ENCODE measurements at regions of chr2 and their contacts with region 1.

Region 1: GRCh38 chr2:231514103-231514950 is 15.9 kb downstream of the NMUR1 start:
- DNase-seq: peak; percentile 96 to 99 (median 98)
- ATAC-seq: peak; percentile 97
- H3K4me3 ChIP-seq: peak overlapping the region; percentile 86 to 88
- H3K4me3 Mint-ChIP-seq: peak overlapping the region; percentile 90
- H3K27ac ChIP-seq: peak overlapping the region; percentile 85 to 94
- H3K27ac Mint-ChIP-seq: peak overlapping the region; percentile 97
- H3K4me1 ChIP-seq: peaks cover 13% of the 10 kb centered on the region
- H3K4me1 Mint-ChIP-seq: peaks cover 18% of the 10 kb centered on the region
- H3K27me3 ChIP-seq: no peaks in the 10 kb centered on the region
- H3K27me3 Mint-ChIP-seq: no peaks in the 10 kb centered on the region
- CTCF ChIP-seq: no peak

Region 2: GRCh38 chr2:231482806-231483391 is 31.4 kb before region 1 on chr2:
- CTCF ChIA-PET with region 1: interaction called, 19 read pairs
- POLR2A ChIA-PET with region 1: interaction called, 11 read pairs
- intact Hi-C with region 1: loop called in 1 of 2 experiments (anchors 1 kb)
- DNase-seq: peak; percentile 47 to 86 (median 73)
- ATAC-seq: peak; percentile 82
- H3K4me3 ChIP-seq: peak overlapping the region; percentile 71 to 73
- H3K4me3 Mint-ChIP-seq: peak overlapping the region; percentile 76
- H3K27ac ChIP-seq: peak overlapping the region; percentile 77 to 89
- H3K27ac Mint-ChIP-seq: peak overlapping the region; percentile 91
- H3K4me1 ChIP-seq: peaks cover 4% of the 10 kb centered on the region
- H3K4me1 Mint-ChIP-seq: peaks cover 14% of the 10 kb centered on the region
- H3K27me3 ChIP-seq: no peaks in the 10 kb centered on the region
- H3K27me3 Mint-ChIP-seq: no peaks in the 10 kb centered on the region
- CTCF ChIP-seq: peak; percentile 75

Region 3: DNA sequence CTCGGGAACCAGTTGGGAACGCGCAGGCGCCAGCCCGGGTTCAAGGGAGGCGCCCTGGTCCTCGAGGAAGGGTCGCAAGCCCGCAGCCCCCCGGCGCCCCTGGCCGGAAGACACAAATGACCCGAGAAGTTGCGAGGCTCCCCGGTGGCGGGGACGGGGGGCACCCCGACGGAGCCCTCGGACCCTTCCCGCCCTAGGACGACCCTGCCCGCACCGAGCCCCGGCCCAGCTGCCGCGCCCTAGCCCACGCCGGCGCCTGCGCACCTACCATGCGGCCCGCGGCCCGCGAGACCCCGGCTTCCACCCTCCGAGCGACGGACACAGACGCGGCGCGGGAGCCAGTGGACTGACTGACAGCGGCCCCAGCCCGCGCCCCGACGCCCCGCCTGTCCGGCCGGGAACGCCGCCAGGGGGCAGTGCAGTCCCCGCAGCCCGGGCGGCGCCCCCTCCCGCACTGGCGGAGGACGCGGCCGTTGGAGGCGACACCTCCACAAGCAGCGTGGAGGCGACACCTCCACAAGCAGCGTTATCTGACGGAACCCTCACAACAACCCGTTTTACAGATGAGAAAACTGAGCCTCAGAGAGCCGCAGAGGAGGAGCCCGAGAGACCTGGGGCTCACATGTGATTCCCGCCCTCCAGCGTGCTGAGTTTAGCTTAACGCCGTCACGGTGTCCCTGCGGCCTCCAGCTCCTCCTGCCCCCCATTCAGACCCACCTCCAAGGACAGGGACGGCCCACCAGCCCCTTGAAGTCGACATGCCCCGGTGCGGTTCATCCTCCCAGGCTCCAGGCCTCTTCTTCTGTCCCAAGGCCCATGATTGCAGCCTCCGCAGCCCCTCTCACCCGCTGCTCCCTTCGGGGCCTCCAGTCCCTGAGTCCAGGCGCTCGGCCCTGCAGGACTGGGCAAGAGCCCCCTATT is 16.0 kb after region 1 on chr2 and contains the start of gene NMUR1:
- CTCF ChIA-PET with region 1: interaction called, 14 read pairs
- POLR2A ChIA-PET with region 1: interaction called, 3 read pairs
- intact Hi-C with region 1: loop called in 1 of 2 experiments (anchors 1 kb)
- DNase-seq: peak; percentile 48 to 89 (median 69)
- ATAC-seq: peak; percentile 92
- H3K4me3 ChIP-seq: peak within 1 kb of the TSS; percentile 33 to 50
- H3K4me3 Mint-ChIP-seq: peak within 1 kb of the TSS; percentile 58
- H3K27ac ChIP-seq: peak within 1 kb of the TSS in 1 of 2 experiments; percentile 67
- H3K27ac Mint-ChIP-seq: peak within 1 kb of the TSS; percentile 32
- H3K4me1 ChIP-seq: peaks cover 33% of the 10 kb centered on the region
- H3K4me1 Mint-ChIP-seq: peaks cover 30% of the 10 kb centered on the region
- H3K27me3 ChIP-seq: peaks cover 0 to 7% of the 10 kb centered on the region in 2 experiments
- H3K27me3 Mint-ChIP-seq: peaks cover 8% of the 10 kb centered on the region
- CTCF ChIP-seq: peak; percentile 89
- total RNA-seq, gene NMUR1: 0.27 to 0.50 TPM

Region 4: DNA sequence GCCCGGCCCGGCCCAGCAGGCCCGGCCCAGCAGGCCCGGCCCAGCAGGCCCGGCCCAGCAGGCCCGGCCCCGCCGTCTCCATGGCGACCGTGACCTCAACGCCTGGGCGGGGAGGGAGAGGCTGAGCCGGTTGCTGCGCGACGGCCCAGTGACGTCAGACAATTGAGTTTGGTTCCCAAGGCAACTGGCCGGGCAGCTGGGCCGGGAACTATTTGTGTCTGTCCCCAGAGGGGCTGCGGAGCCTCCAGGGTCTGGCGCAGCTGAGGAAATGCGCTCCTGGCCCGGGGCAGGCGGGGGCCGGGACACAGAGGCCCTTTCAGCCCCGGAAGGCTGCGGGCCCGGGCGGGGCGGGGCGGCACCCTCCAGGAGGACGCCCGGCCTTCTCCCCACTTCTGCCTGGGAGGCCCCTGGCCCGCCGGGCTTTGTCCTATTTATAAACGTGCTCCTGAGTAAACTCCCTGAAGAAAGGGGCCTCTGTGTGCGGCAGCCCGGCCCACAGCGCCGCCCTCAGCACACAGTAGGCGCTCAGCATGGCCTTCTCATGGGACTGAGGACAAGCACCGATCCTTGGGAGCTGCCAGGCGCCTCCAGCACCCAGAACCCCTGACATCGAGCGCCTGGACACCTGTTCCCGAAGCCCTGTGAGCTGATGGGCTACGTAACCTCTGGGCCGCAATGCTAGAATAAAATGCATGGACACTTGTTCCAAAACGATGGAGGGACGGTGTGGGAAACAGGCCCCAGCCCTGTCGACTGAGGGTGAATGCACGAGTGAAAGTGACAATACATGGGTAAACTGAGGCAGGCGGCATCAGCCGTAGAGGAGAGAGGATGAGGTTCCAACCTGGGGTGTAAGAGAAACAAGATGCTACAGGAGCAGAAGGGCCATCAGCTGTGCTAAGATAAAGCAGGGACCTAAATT is 90.6 kb after region 1 on chr2:
- CTCF ChIA-PET with region 1: interaction called, 13 read pairs
- POLR2A ChIA-PET with region 1: interaction called, 3 read pairs
- intact Hi-C with region 1: loop called (anchors 1 kb)
- DNase-seq: peak; percentile 90 to 98 (median 95)
- ATAC-seq: peak; percentile 76
- H3K4me3 ChIP-seq: peak overlapping the region; percentile 37 to 42
- H3K4me3 Mint-ChIP-seq: peak overlapping the region; percentile 69
- H3K27ac ChIP-seq: peak overlapping the region; percentile 46 to 66
- H3K27ac Mint-ChIP-seq: peak overlapping the region; percentile 32
- H3K4me1 ChIP-seq: peaks cover 12% of the 10 kb centered on the region
- H3K4me1 Mint-ChIP-seq: peaks cover 7% of the 10 kb centered on the region
- H3K27me3 ChIP-seq: no peaks in the 10 kb centered on the region
- H3K27me3 Mint-ChIP-seq: peaks cover 2% of the 10 kb centered on the region
- CTCF ChIP-seq: no peak

Region 5: GRCh38 chr2:231706731-231707624 is 192.7 kb after region 1 on chr2:
- CTCF ChIA-PET with region 1: interaction called, 3 read pairs
- POLR2A ChIA-PET with region 1: interaction called, 4 read pairs
- intact Hi-C with region 1: loop called in 1 of 2 experiments (anchors 1 kb)
- DNase-seq: peak; percentile 93 to 99 (median 97)
- ATAC-seq: peak; percentile 50
- H3K4me3 ChIP-seq: peak overlapping the region; percentile 85 to 92
- H3K4me3 Mint-ChIP-seq: peak overlapping the region; percentile 98
- H3K27ac ChIP-seq: peak overlapping the region; percentile 95 to 97
- H3K27ac Mint-ChIP-seq: peak overlapping the region; percentile 100
- H3K4me1 ChIP-seq: peaks cover 25% of the 10 kb centered on the region
- H3K4me1 Mint-ChIP-seq: peaks cover 31% of the 10 kb centered on the region
- H3K27me3 ChIP-seq: no peaks in the 10 kb centered on the region
- H3K27me3 Mint-ChIP-seq: no peaks in the 10 kb centered on the region
- CTCF ChIP-seq: peak; percentile 83

Measured in CD8-positive, alpha-beta T cell (primary cell).